CD4-positive, alpha-beta T cell (primary cell): ENCODE measurements at regions of chr9 and their contacts with region 1.

Region 1: DNA sequence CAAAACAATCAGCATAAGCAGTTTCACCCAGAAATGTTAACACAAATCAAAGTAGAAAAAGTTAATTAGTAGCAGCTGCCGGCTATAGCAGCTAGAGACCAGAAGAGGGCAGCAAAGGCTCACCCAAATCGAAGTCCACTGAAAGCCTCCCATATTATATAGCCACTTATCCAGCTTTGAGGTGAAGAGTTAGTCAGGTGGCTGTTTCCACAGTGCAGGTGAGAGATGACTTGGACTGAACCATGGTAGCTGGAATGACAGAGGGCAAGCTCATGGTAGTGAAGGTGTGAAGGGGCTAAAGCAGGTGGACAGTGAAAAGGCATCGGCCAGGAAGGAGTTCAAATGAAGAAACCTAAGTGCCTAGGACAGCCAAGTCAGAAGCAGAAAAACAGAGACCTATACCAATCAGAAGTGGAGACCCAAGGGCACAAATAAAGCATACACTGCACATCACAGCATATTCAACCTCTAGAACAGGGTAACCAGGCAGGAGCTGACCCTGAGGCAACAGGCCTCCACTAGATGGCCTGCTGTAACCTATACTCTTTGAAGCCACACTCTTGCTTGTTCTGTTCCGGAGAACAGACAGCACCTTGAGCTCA is 7.2 kb upstream of the RNF38 start:
- DNase-seq: peak; percentile 35 to 88 (median 51)
- ATAC-seq: peak; percentile 96
- H3K4me3 ChIP-seq: no peak overlapping the region
- H3K4me3 Mint-ChIP-seq: no peak overlapping the region
- H3K27ac ChIP-seq: no peak overlapping the region
- H3K27ac Mint-ChIP-seq: peak overlapping the region; percentile 67
- H3K4me1 ChIP-seq: peaks cover 6% of the 10 kb centered on the region
- H3K4me1 Mint-ChIP-seq: peaks cover 26% of the 10 kb centered on the region
- H3K27me3 ChIP-seq: no peaks in the 10 kb centered on the region
- H3K27me3 Mint-ChIP-seq: no peaks in the 10 kb centered on the region
- CTCF ChIP-seq: peak; percentile 95

Region 2: GRCh38 chr9:36169728-36170127 is 237.5 kb before region 1 on chr9:
- CTCF ChIA-PET with region 1: no interaction called
- POLR2A ChIA-PET with region 1: no interaction called
- intact Hi-C with region 1: no loop called
- DNase-seq: no peak
- ATAC-seq: no peak
- H3K4me3 ChIP-seq: no peak overlapping the region
- H3K4me3 Mint-ChIP-seq: no peak overlapping the region
- H3K27ac ChIP-seq: no peak overlapping the region
- H3K27ac Mint-ChIP-seq: no peak overlapping the region
- H3K4me1 ChIP-seq: peaks cover 15% of the 10 kb centered on the region
- H3K4me1 Mint-ChIP-seq: no peaks in the 10 kb centered on the region
- H3K27me3 ChIP-seq: no peaks in the 10 kb centered on the region
- H3K27me3 Mint-ChIP-seq: no peaks in the 10 kb centered on the region
- CTCF ChIP-seq: no peak

Region 3: DNA sequence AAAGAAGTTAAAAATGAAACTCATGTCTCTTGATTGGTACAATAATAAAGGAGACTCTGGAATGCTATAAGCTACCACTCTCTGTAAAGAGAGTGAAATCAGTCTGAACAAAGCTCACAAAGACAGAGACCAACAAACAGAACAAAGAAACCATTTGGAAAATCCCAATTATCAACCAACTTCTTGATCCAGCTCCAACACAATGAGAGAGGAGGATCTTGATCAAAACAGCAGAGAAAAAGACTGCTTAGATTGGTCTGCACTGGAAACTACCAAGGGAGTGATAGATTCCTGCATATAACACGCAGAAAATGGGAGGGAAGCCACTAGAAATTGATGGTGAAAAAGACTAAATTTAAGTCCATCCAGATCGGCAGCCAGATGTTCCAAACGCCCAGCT is 16.0 kb after region 1 on chr9:
- CTCF ChIA-PET with region 1: interaction called, 11 read pairs
- POLR2A ChIA-PET with region 1: interaction called, 5 read pairs
- intact Hi-C with region 1: no loop called
- DNase-seq: no peak
- ATAC-seq: no peak
- H3K4me3 ChIP-seq: no peak overlapping the region
- H3K4me3 Mint-ChIP-seq: no peak overlapping the region
- H3K27ac ChIP-seq: no peak overlapping the region
- H3K27ac Mint-ChIP-seq: peak overlapping the region; percentile 60
- H3K4me1 ChIP-seq: peaks cover 9% of the 10 kb centered on the region
- H3K4me1 Mint-ChIP-seq: peaks cover 38% of the 10 kb centered on the region
- H3K27me3 ChIP-seq: no peaks in the 10 kb centered on the region
- H3K27me3 Mint-ChIP-seq: no peaks in the 10 kb centered on the region
- CTCF ChIP-seq: no peak

Region 4: GRCh38 chr9:36461323-36461722 is 54.1 kb after region 1 on chr9:
- CTCF ChIA-PET with region 1: interaction called, 9 read pairs
- POLR2A ChIA-PET with region 1: interaction called, 6 read pairs
- intact Hi-C with region 1: loop called in 1 of 2 experiments (anchors 2 kb)
- DNase-seq: no peak
- ATAC-seq: no peak
- H3K4me3 ChIP-seq: no peak overlapping the region
- H3K4me3 Mint-ChIP-seq: peak overlapping the region; percentile 5
- H3K27ac ChIP-seq: peak overlapping the region in 1 of 2 donors; percentile 4
- H3K27ac Mint-ChIP-seq: peak overlapping the region; percentile 29
- H3K4me1 ChIP-seq: peaks cover 26% of the 10 kb centered on the region
- H3K4me1 Mint-ChIP-seq: peaks cover 68% of the 10 kb centered on the region
- H3K27me3 ChIP-seq: no peaks in the 10 kb centered on the region
- H3K27me3 Mint-ChIP-seq: no peaks in the 10 kb centered on the region
- CTCF ChIP-seq: no peak

Region 5: DNA sequence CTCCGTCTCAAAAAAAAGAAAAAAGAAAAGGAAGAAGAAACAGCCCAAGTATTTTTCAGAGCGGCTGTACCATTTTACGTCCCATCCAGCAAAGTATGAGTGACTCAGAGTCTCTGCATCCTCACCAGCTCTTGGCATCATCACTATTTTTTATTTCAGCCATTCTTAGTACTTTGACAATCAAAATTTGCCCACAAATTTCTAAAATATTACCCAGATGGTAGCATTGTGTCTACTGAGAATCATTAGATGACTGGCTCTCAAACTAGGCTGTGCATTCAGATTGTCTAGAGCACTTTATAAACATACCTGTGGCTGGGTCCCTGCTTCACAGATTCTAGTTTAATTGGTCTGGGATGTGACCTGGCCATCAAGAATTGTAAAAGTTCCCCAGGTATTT is 143.9 kb after region 1 on chr9:
- CTCF ChIA-PET with region 1: interaction called, 64 read pairs
- POLR2A ChIA-PET with region 1: interaction called, 20 read pairs
- intact Hi-C with region 1: loop called (anchors 1 kb)
- DNase-seq: no peak
- ATAC-seq: no peak
- H3K4me3 ChIP-seq: no peak overlapping the region
- H3K4me3 Mint-ChIP-seq: no peak overlapping the region
- H3K27ac ChIP-seq: no peak overlapping the region
- H3K27ac Mint-ChIP-seq: no peak overlapping the region
- H3K4me1 ChIP-seq: no peaks in the 10 kb centered on the region
- H3K4me1 Mint-ChIP-seq: peaks cover 5% of the 10 kb centered on the region
- H3K27me3 ChIP-seq: no peaks in the 10 kb centered on the region
- H3K27me3 Mint-ChIP-seq: peaks cover 5% of the 10 kb centered on the region
- CTCF ChIP-seq: no peak

Region 6: GRCh38 chr9:36572515-36573418 is 165.5 kb after region 1 on chr9 and contains the start of gene MELK:
- CTCF ChIA-PET with region 1: interaction called, 3 read pairs
- POLR2A ChIA-PET with region 1: no interaction called
- intact Hi-C with region 1: loop called in 1 of 2 experiments (anchors 5 kb)
- DNase-seq: peak; percentile 67 to 89 (median 80)
- ATAC-seq: peak; percentile 79
- H3K4me3 ChIP-seq: peak within 1 kb of the TSS; percentile 92
- H3K4me3 Mint-ChIP-seq: peak within 1 kb of the TSS; percentile 92
- H3K27ac ChIP-seq: peak within 1 kb of the TSS; percentile 46 to 69
- H3K27ac Mint-ChIP-seq: peak within 1 kb of the TSS; percentile 68
- H3K4me1 ChIP-seq: peaks cover 19% of the 10 kb centered on the region
- H3K4me1 Mint-ChIP-seq: peaks cover 25% of the 10 kb centered on the region
- H3K27me3 ChIP-seq: no peaks in the 10 kb centered on the region
- H3K27me3 Mint-ChIP-seq: no peaks in the 10 kb centered on the region
- CTCF ChIP-seq: no peak
- total RNA-seq, gene MELK: 0.42 to 0.47 TPM